ENCODE measurements at regions of chr3 and their contacts with region 1.

Region 1: GRCh38 chr3:72872183-72872582 is 15.7 kb upstream of the GXYLT2 start:
- DNase-seq: no peak
- H3K4me3 ChIP-seq: no peak overlapping the region
- H3K27ac ChIP-seq: no peak overlapping the region
- H3K4me1 ChIP-seq: no peaks in the 10 kb centered on the region
- H3K27me3 ChIP-seq: peaks cover 3 to 5% of the 10 kb centered on the region in 2 experiments
- CTCF ChIP-seq: no peak
- POLR2A ChIP-seq: no peak

Region 2: GRCh38 chr3:72887705-72888545 is 15.7 kb after region 1 on chr3 and contains the start of gene GXYLT2:
- CTCF ChIA-PET with region 1: interaction called, 13 read pairs
- POLR2A ChIA-PET with region 1: no interaction called
- dilution Hi-C with region 1: no loop called
- intact Hi-C with region 1: no loop called
- DNase-seq: peak; percentile 34
- H3K4me3 ChIP-seq: peak within 1 kb of the TSS in 2 of 3 experiments; percentile 11 to 12
- H3K27ac ChIP-seq: no peak within 1 kb of the TSS
- H3K4me1 ChIP-seq: peaks cover 5% of the 10 kb centered on the region
- H3K27me3 ChIP-seq: peaks cover 38 to 49% of the 10 kb centered on the region in 2 experiments
- CTCF ChIP-seq: no peak
- POLR2A ChIP-seq: no peak
- total RNA-seq, gene GXYLT2: 0.14 and 0.24 TPM in 2 replicates